ENCODE measurements at regions of chr1 and their contacts with region 1.

Region 1: DNA sequence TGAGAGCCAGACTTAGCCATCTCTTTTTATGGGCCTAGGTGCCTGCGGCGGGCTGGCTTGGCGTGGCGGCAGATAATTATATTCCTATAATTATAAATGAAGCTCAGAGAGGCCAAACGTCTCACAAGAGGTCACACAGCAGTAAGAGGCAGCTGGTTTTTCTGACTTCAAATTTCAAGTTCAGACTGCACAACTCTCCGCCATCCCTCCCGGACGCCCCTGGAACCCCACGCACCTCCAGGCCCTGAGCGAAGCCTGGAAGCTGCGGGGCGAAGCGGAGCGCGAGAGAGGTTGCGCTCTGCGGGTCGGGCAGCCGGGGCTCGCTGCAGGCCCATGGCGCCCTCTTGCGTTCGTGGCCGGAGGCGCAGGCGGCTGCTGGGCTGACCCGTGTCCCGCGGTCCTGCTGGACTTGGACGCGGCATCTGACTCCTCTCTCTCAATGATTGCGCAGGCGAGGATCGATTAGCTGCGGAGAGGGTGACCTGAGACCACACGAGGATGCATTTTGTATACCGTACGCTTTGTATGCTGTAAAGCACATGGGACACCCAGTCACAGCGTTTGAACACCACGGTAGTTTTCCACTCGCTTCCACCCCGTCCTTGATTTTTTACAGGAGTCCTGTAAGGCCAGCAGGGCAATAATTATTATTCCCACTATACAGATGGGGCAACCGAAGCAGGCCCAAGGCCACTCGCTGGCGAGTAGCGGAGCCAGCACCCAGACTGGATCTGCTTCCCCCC is 272.7 kb downstream of the FOXD2 start:
- DNase-seq: peak; percentile 68
- H3K4me3 Mint-ChIP-seq: no peak overlapping the region
- H3K27ac Mint-ChIP-seq: no peak overlapping the region
- H3K4me1 Mint-ChIP-seq: peaks cover 3% of the 10 kb centered on the region
- H3K27me3 Mint-ChIP-seq: peaks cover 71% of the 10 kb centered on the region

Region 2: GRCh38 chr1:47002211-47002610 is 708.3 kb before region 1 on chr1:
- CTCF ChIA-PET with region 1: no interaction called
- intact Hi-C with region 1: no loop called
- DNase-seq: no peak
- H3K4me3 Mint-ChIP-seq: no peak overlapping the region
- H3K27ac Mint-ChIP-seq: no peak overlapping the region
- H3K4me1 Mint-ChIP-seq: no peaks in the 10 kb centered on the region
- H3K27me3 Mint-ChIP-seq: peaks cover 39% of the 10 kb centered on the region

Region 3: GRCh38 chr1:47388891-47389238 is 321.6 kb before region 1 on chr1:
- CTCF ChIA-PET with region 1: interaction called, 16 read pairs
- intact Hi-C with region 1: loop called (anchors 1 kb)
- DNase-seq: peak; percentile 70
- H3K4me3 Mint-ChIP-seq: no peak overlapping the region
- H3K27ac Mint-ChIP-seq: no peak overlapping the region
- H3K4me1 Mint-ChIP-seq: no peaks in the 10 kb centered on the region
- H3K27me3 Mint-ChIP-seq: peaks cover 7% of the 10 kb centered on the region

Region 4: GRCh38 chr1:47432071-47433036 is 278.1 kb before region 1 on chr1:
- CTCF ChIA-PET with region 1: interaction called, 123 read pairs
- intact Hi-C with region 1: loop called (anchors 1 kb)
- DNase-seq: peak; percentile 82
- H3K4me3 Mint-ChIP-seq: peak overlapping the region; percentile 26
- H3K27ac Mint-ChIP-seq: no peak overlapping the region
- H3K4me1 Mint-ChIP-seq: peaks cover 33% of the 10 kb centered on the region
- H3K27me3 Mint-ChIP-seq: peaks cover 64% of the 10 kb centered on the region

Region 5: GRCh38 chr1:47507881-47508701 is 202.4 kb before region 1 on chr1:
- CTCF ChIA-PET with region 1: no interaction called
- intact Hi-C with region 1: loop called (anchors 5 kb)
- DNase-seq: peak; percentile 31
- H3K4me3 Mint-ChIP-seq: peak overlapping the region; percentile 8
- H3K27ac Mint-ChIP-seq: no peak overlapping the region
- H3K4me1 Mint-ChIP-seq: peaks cover 3% of the 10 kb centered on the region
- H3K27me3 Mint-ChIP-seq: peaks cover 70% of the 10 kb centered on the region

Region 6: DNA sequence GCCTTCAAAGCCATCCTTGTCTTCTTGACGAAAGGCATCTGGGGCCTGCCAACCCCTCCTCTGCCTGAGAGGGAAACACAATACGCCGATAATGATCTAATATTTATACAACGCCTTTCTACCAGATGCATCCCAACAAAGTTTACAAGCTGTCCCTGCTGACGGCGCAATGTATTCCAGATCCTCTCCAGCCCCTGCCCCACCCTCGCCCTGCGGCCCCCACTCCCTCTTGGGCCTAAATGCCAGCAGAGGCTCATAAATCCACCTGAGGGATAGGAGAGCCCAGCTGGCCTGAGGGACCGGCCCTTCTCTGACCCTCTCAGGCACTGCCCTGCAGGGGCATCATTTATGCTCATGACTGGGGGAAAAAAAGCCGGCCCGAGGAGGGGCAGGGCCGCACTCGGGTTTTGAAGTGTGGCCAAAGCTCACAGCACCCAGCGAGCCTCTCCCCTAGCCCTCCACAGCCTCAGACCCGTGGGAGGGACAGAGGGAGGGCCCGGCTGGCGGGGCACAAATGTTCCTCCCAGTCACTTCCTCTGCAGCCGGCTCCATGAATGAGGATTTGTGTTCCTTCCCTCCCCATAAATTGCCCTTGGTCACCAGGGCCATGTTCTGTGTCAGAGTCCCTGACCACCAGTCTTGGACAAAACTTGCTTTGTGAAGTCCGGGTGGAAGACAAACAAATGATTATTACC is 132.3 kb before region 1 on chr1:
- CTCF ChIA-PET with region 1: no interaction called
- intact Hi-C with region 1: no loop called
- DNase-seq: no peak
- H3K4me3 Mint-ChIP-seq: no peak overlapping the region
- H3K27ac Mint-ChIP-seq: no peak overlapping the region
- H3K4me1 Mint-ChIP-seq: no peaks in the 10 kb centered on the region
- H3K27me3 Mint-ChIP-seq: peaks cover 23% of the 10 kb centered on the region

Region 7: DNA sequence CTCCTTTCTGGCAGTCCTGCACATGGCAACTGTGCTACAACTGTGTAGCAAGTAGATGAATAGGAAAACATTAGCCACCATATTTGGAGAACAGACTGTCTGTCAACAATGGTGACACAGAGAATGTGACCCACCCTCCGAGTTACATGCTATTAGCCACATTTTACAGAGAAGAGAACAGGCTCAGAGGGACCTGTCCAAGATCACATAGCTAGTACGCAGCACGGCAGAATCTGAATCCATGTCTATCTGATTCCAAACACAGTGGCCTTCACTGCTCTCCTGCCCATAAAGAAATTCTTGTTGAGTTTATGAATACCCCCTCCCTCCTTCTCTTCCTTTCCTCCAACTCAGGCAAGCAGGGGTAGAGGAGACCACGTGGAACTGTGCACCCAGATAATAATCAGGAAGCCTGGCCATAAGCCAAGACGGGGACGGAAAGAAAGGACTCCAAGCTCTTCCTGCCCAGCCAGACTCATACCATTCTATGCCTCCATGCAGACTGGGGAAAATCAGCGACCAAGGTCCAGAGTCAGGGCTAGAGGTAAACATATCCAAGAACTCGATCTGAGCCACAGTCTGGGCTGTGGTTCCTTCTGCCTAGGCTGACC is 207.9 kb after region 1 on chr1:
- CTCF ChIA-PET with region 1: no interaction called
- intact Hi-C with region 1: no loop called
- DNase-seq: no peak
- H3K4me3 Mint-ChIP-seq: no peak overlapping the region
- H3K27ac Mint-ChIP-seq: no peak overlapping the region
- H3K4me1 Mint-ChIP-seq: no peaks in the 10 kb centered on the region
- H3K27me3 Mint-ChIP-seq: peaks cover 8% of the 10 kb centered on the region

Measured in activated naive CD4-positive, alpha-beta T cell treated with anti-CD3 and anti-CD28 coated beads for 36 hours (primary cell).